Calu3 (cell line): ENCODE measurements at regions of chr11 and their contacts with region 1.

Region 1: DNA sequence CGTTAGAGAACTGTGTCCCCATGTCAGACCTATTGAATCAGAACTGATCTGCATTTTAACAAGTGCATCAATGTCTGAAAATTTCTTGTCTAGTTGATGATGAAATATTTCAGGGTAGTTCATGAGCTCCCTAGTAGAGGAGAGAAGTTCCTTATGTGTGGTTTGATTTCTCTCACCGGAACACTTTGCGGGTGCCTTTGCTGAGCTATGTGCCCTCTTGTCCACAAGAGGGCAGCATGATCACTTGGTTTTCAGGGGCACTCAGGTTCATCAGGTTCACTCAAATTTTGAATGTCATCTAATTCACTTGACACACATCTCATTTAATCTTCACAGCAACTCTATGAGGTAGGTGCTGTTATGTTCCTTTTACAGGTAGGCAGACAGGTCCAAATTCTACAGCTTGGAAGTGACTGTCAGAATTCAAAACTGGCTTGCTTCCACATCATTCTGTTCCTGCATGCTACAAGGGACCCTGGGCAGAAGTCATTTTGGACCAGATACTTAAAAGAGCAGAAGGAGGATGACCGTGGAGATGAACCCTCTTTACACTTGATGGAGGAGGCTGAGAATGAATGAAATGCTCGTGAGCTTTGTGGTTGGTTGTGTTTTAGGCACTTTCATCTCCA is 55.6 kb downstream of the P4HA3 start:
- DNase-seq: peak; percentile 37
- H3K4me3 Mint-ChIP-seq: no peak overlapping the region
- H3K27ac Mint-ChIP-seq: no peak overlapping the region
- H3K4me1 Mint-ChIP-seq: no peaks in the 10 kb centered on the region
- H3K27me3 Mint-ChIP-seq: peaks cover 6% of the 10 kb centered on the region
- CTCF ChIP-seq: peak; percentile 76

Region 2: GRCh38 chr11:74321487-74322188 is 65.8 kb after region 1 on chr11:
- CTCF ChIA-PET with region 1: interaction called, 12 read pairs
- intact Hi-C with region 1: loop called (anchors 2 kb)
- DNase-seq: peak; percentile 32
- H3K4me3 Mint-ChIP-seq: no peak overlapping the region
- H3K27ac Mint-ChIP-seq: no peak overlapping the region
- H3K4me1 Mint-ChIP-seq: no peaks in the 10 kb centered on the region
- H3K27me3 Mint-ChIP-seq: peaks cover 25% of the 10 kb centered on the region
- CTCF ChIP-seq: peak; percentile 61

Region 3: GRCh38 chr11:74388678-74389327 is 132.9 kb after region 1 on chr11:
- CTCF ChIA-PET with region 1: interaction called, 3 read pairs
- intact Hi-C with region 1: loop called (anchors 5 kb)
- DNase-seq: peak; percentile 70
- H3K4me3 Mint-ChIP-seq: no peak overlapping the region
- H3K27ac Mint-ChIP-seq: no peak overlapping the region
- H3K4me1 Mint-ChIP-seq: peaks cover 13% of the 10 kb centered on the region
- H3K27me3 Mint-ChIP-seq: no peaks in the 10 kb centered on the region
- CTCF ChIP-seq: peak; percentile 59

Region 4: DNA sequence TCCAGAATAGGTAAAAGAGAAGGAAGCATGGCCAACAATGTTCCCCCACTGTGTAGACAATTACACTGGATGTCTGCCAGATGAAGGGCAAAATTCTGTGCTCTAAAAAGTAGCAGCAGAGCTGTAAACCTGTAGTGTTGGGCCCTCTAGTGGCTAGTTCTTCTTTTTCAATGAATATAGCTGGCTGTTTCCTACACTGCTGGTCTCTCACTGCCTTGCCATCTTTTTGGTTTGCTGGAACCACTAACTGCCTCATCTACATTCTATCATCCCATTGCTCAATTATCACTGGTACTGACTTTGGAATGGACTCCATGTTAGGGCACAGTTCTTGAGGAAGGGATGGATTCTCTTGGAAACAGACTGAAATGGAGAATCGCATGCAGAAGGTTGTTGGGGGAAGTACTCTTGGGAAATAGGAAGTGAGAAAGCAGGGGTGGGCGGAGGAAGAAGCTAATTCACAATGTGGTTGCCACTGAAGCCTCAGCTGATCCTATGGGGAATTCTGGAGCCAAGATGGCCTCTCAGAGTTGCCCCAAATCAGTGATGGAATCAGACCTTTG is 193.6 kb after region 1 on chr11:
- CTCF ChIA-PET with region 1: interaction called, 46 read pairs
- intact Hi-C with region 1: loop called (anchors 1 kb)
- DNase-seq: peak; percentile 60
- H3K4me3 Mint-ChIP-seq: no peak overlapping the region
- H3K27ac Mint-ChIP-seq: no peak overlapping the region
- H3K4me1 Mint-ChIP-seq: peaks cover 9% of the 10 kb centered on the region
- H3K27me3 Mint-ChIP-seq: no peaks in the 10 kb centered on the region
- CTCF ChIP-seq: peak; percentile 62